ENCODE measurements at regions of chr19 and their contacts with region 1.

Region 1: GRCh38 chr19:43555185-43555770 is 20.0 kb downstream of the XRCC1 start:
- DNase-seq: peak; percentile 70
- H3K4me3 ChIP-seq: no peak overlapping the region
- H3K27ac ChIP-seq: no peak overlapping the region
- H3K4me1 ChIP-seq: no peaks in the 10 kb centered on the region
- H3K27me3 ChIP-seq: no peaks in the 10 kb centered on the region
- CTCF ChIP-seq: peak; percentile 84 to 94
- POLR2A ChIP-seq: no peak

Region 2: GRCh38 chr19:43545276-43545675 is 10.0 kb before region 1 on chr19:
- CTCF ChIA-PET with region 1: interaction called, 12 read pairs
- POLR2A ChIA-PET with region 1: no interaction called
- dilution Hi-C with region 1: no loop called
- intact Hi-C with region 1: no loop called
- DNase-seq: no peak
- H3K4me3 ChIP-seq: no peak overlapping the region
- H3K27ac ChIP-seq: no peak overlapping the region
- H3K4me1 ChIP-seq: no peaks in the 10 kb centered on the region
- H3K27me3 ChIP-seq: no peaks in the 10 kb centered on the region
- CTCF ChIP-seq: no peak
- POLR2A ChIP-seq: no peak

Region 3: GRCh38 chr19:43575156-43575950 is 20.1 kb after region 1 on chr19 and contains the starts of genes PINLYP and XRCC1:
- CTCF ChIA-PET with region 1: interaction called, 31 read pairs
- POLR2A ChIA-PET with region 1: interaction called, 3 read pairs
- dilution Hi-C with region 1: no loop called
- intact Hi-C with region 1: no loop called
- DNase-seq: peak; percentile 99
- H3K4me3 ChIP-seq: peak within 1 kb of the TSS; percentile 52 to 86 (median 79)
- H3K27ac ChIP-seq: peak within 1 kb of the TSS; percentile 73
- H3K4me1 ChIP-seq: peaks cover 7% of the 10 kb centered on the region
- H3K27me3 ChIP-seq: no peaks in the 10 kb centered on the region
- CTCF ChIP-seq: no peak
- POLR2A ChIP-seq: peak; percentile 62
- total RNA-seq, gene PINLYP: 2.6 and 5.5 TPM in 2 replicates
- total RNA-seq, gene XRCC1: 37.3 and 39.3 TPM in 2 replicates

Region 4: DNA sequence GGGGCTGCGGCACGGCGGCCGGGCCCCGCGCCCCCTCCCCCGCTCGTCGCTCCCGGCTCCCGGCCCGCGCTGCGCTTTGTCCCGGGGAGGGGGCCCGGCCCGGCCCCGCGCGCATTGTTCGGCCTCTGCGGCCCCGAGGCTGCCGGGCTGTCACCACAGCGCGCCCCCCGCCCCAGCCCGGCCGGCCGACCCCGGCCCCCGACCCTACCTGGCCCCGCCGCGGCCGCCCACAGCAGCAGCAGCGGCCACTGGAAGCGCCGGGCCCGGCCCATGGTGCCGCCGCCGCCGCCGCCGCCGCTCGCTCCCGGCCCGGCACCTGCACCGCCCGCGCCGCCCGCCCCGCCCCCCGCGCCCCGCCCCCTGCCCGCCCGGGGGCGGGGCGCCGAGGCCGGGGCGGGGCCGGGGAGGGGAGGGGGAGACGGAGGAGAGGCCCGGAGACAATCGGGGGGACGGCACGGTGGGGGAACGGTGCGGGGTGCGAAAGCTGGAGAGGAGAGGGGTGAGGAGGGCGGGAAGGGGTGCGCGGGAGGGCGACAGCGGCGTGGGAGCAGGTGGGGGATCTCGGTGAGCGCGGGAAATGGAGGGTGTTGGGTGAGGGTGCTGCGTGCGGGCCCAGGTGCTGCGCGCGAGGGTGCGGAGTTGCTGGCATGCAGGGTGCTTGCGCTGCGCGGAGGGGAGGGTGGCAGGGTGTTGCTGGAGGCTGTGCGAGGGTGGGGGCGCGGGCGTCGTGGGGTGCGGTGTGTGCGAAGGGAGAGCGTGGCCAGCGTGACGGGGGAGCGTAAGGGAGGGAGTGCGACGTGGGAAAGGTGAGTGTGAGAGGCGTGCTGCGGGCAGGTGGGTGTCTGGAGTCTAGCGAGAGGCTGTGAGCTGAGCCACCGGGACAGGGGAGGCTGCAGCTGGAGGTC is 84.5 kb after region 1 on chr19 and contains the start of gene CADM4:
- CTCF ChIA-PET with region 1: no interaction called
- POLR2A ChIA-PET with region 1: no interaction called
- dilution Hi-C with region 1: no loop called
- intact Hi-C with region 1: no loop called
- DNase-seq: no peak
- H3K4me3 ChIP-seq: peak within 1 kb of the TSS in 2 of 3 experiments; percentile 19 to 49
- H3K27ac ChIP-seq: no peak within 1 kb of the TSS
- H3K4me1 ChIP-seq: peaks cover 7% of the 10 kb centered on the region
- H3K27me3 ChIP-seq: peaks cover 15 to 25% of the 10 kb centered on the region in 2 experiments
- CTCF ChIP-seq: no peak
- POLR2A ChIP-seq: no peak
- total RNA-seq, gene CADM4: 6.7 and 7.5 TPM in 2 replicates

Region 5: GRCh38 chr19:43651758-43652545 is 96.7 kb after region 1 on chr19:
- CTCF ChIA-PET with region 1: interaction called, 27 read pairs
- POLR2A ChIA-PET with region 1: no interaction called
- dilution Hi-C with region 1: no loop called
- intact Hi-C with region 1: loop called (anchors 1 kb)
- DNase-seq: peak; percentile 77
- H3K4me3 ChIP-seq: peak overlapping the region in 1 of 3 experiments; percentile 7
- H3K27ac ChIP-seq: no peak overlapping the region
- H3K4me1 ChIP-seq: no peaks in the 10 kb centered on the region
- H3K27me3 ChIP-seq: no peaks in the 10 kb centered on the region
- CTCF ChIP-seq: peak; percentile 82 to 86
- POLR2A ChIP-seq: no peak

Region 6: DNA sequence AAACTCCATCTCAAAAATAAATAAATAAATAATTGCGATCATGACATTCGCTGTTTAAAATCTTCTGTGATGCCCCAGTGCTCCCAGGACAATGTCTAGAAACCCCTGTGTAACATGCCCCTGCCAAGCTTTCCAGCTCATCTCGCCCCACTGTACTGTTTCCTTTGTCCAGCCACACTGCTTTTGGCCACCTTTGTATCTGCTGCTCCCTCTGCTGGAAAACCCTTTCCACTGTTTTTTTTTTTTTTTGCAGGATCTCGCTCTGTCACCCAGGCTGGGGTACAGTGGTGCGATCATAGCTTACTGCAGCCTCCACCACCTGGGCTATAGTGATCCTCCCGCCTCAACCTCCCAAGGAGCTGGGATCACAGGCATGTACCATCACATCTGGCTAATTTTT is 107.2 kb after region 1 on chr19:
- CTCF ChIA-PET with region 1: interaction called, 15 read pairs
- POLR2A ChIA-PET with region 1: no interaction called
- dilution Hi-C with region 1: no loop called
- intact Hi-C with region 1: no loop called
- DNase-seq: no peak
- H3K4me3 ChIP-seq: no peak overlapping the region
- H3K27ac ChIP-seq: no peak overlapping the region
- H3K4me1 ChIP-seq: peaks cover 23% of the 10 kb centered on the region
- H3K27me3 ChIP-seq: no peaks in the 10 kb centered on the region
- CTCF ChIP-seq: peak; percentile 28 to 39
- POLR2A ChIP-seq: no peak